ENCODE measurements at regions of chr1 and their contacts with region 1.

Region 1: DNA sequence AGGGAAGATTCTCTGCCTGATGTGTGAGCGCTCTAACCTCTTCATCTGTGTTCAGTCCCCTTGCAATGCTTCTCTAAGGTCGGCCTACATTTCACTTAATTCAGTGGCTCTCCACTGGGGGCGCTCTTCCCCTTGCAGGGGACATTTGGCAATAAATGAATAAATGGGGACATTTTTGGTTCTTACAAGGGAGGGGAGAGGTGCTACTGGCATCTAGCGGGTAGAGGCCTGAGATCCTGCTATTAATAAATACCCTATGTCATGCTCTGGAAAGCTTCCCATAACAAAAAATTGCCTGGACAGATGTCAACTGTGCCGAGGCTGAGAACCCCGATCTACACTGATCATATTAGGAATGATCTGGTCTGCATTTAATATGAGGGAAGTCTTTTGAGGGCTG is 25.9 kb upstream of the DNAJC11 start:
- DNase-seq: peak; percentile 59
- ATAC-seq: peak; percentile 44; the same call in 2 of the 3 replicates
- H3K4me3 ChIP-seq: no peak overlapping the region
- H3K27ac ChIP-seq: no peak overlapping the region
- H3K4me1 ChIP-seq: peaks cover 25% of the 10 kb centered on the region
- H3K27me3 ChIP-seq: peaks cover 0 to 25% of the 10 kb centered on the region in 2 experiments; a peak in 2 of 5 replicates
- CTCF ChIP-seq: peak; percentile 72
- EP300 ChIP-seq: no peak
- POLR2A ChIP-seq: no peak
- RAD21 ChIP-seq: peak; percentile 55; the same call in 1 of the 2 replicates

Region 2: GRCh38 chr1:6613361-6614018 is 114.0 kb before region 1 on chr1 and contains the start of gene PHF13:
- CTCF ChIA-PET with region 1: no interaction called
- POLR2A ChIA-PET with region 1: no interaction called
- in situ Hi-C with region 1: no loop called
- intact Hi-C with region 1: no loop called
- DNase-seq: peak; percentile 97
- ATAC-seq: peak; percentile 92
- H3K4me3 ChIP-seq: peak within 1 kb of the TSS; percentile 84 to 97 (median 92)
- H3K27ac ChIP-seq: peak within 1 kb of the TSS; percentile 87
- H3K4me1 ChIP-seq: peaks cover 46% of the 10 kb centered on the region
- H3K27me3 ChIP-seq: no peaks in the 10 kb centered on the region; a peak in 1 of 5 replicates
- CTCF ChIP-seq: no peak
- EP300 ChIP-seq: peak in 1 of 2 experiments; percentile 34; a peak in 1 of 4 replicates
- POLR2A ChIP-seq: peak in 1 of 2 experiments; percentile 33; a peak in 2 of 4 replicates
- RAD21 ChIP-seq: no peak
- total RNA-seq, gene PHF13: 7.4 and 8.4 TPM in 2 replicates

Region 3: DNA sequence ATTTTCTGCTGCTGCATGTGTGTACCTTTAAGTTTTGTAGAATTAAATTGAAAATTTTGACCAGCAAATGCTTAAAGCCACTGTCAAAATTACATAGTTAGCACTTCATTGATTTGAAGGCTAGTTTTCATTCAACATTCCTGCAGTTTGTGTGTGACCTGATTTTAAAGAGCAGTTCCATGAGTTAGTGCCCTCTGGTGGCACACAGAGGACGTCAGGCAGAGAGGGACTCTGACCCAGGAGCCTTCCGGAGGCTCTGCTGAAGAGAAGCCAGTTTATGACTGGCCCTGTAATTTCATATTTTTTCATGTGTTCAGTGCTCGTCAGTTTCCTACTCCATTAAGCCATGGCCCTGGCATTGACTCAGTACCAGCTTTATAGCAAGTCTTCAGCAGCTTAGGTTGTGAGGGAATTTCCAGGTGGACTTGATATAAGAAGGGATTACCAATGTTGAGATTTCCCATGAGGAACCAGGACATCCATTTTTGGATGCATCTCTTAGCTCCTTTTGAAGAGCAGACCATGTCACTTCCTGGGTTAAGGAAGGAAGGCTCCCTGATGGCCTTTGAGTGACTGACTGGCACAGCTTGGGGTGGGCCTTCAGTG is 162.4 kb after region 1 on chr1:
- CTCF ChIA-PET with region 1: interaction called, 5 read pairs
- POLR2A ChIA-PET with region 1: no interaction called
- in situ Hi-C with region 1: loop called (anchors 10 kb)
- intact Hi-C with region 1: loop called (anchors 2 kb)
- DNase-seq: peak; percentile 66
- ATAC-seq: peak; percentile 96
- H3K4me3 ChIP-seq: no peak overlapping the region
- H3K27ac ChIP-seq: no peak overlapping the region
- H3K4me1 ChIP-seq: peaks cover 6% of the 10 kb centered on the region
- H3K27me3 ChIP-seq: no peaks in the 10 kb centered on the region
- CTCF ChIP-seq: peak; percentile 82
- EP300 ChIP-seq: no peak
- POLR2A ChIP-seq: no peak
- RAD21 ChIP-seq: peak; percentile 71

Region 4: DNA sequence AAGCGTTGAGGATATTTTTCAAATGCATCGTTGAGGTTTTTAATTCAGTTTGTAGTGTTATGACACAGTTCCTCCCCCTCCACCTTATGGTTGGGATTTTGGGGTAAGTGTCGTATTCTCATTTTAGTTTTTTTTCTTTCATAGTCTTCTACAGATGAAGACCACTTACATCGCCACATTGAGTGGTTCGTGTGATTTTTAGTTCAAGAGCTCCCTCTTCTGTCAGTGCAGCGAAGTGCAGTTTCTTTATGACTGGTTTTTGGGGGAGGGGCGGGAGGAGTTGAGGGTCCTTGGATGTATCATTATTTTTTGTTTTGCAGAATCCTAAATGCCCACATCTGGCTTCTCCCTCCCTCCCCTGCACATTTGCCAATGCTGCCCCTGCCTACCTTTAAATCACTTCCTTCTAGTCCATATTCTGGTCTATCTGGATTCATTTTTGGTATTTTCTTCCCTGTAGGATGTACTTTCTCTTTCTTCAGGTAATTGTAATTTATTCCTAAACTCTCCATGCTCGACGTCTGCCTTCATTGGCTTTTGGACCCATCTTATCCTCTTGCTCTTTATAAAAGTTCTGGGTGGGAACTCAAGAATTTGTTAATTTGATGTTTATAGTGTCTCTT is 490.8 kb after region 1 on chr1:
- CTCF ChIA-PET with region 1: no interaction called
- POLR2A ChIA-PET with region 1: no interaction called
- in situ Hi-C with region 1: loop called (anchors 25 kb)
- intact Hi-C with region 1: loop called (anchors 5 kb)
- DNase-seq: peak; percentile 44
- ATAC-seq: no peak
- H3K4me3 ChIP-seq: no peak overlapping the region
- H3K27ac ChIP-seq: no peak overlapping the region
- H3K4me1 ChIP-seq: no peaks in the 10 kb centered on the region
- H3K27me3 ChIP-seq: peaks cover 2 to 13% of the 10 kb centered on the region in 2 experiments; a peak in 4 of 5 replicates
- CTCF ChIP-seq: peak; percentile 79
- EP300 ChIP-seq: no peak
- POLR2A ChIP-seq: no peak
- RAD21 ChIP-seq: peak; percentile 56; the same call in 1 of the 2 replicates